ENCODE measurements at regions of chr18 and their contacts with region 1.

Region 1: DNA sequence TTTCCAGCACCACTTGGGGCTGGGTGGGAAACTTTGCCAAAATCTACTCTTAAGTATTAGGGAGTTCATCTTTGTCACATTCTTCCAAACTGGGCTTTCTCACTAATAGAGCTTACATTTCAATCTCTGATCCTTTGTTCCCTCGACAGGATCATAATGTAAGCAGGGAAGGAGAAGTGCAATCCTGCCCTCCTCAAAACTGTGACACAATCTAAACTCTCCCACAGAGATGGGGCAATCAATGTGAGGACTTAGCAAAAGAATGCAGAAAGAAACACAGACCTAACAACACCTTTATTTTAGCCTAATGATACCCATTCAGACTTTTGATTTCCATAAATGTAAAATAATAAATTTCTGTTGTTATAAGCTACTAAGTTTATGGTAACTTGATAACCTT is 40.8 kb downstream of the DSEL start:
- DNase-seq: no peak
- H3K4me3 ChIP-seq: no peak overlapping the region
- H3K4me3 Mint-ChIP-seq: no peak overlapping the region
- H3K27ac ChIP-seq: no peak overlapping the region
- H3K27ac Mint-ChIP-seq: no peak overlapping the region
- H3K4me1 ChIP-seq: no peaks in the 10 kb centered on the region
- H3K4me1 Mint-ChIP-seq: no peaks in the 10 kb centered on the region
- H3K27me3 ChIP-seq: no peaks in the 10 kb centered on the region
- H3K27me3 Mint-ChIP-seq: peaks cover 0 to 1% of the 10 kb centered on the region in 2 donors

Region 2: GRCh38 chr18:67250776-67251424 is 224.8 kb before region 1 on chr18:
- CTCF ChIA-PET with region 1: no interaction called
- POLR2A ChIA-PET with region 1: no interaction called
- intact Hi-C with region 1: loop called (anchors 5 kb)
- DNase-seq: no peak
- H3K4me3 ChIP-seq: no peak overlapping the region
- H3K4me3 Mint-ChIP-seq: no peak overlapping the region
- H3K27ac ChIP-seq: no peak overlapping the region
- H3K27ac Mint-ChIP-seq: no peak overlapping the region
- H3K4me1 ChIP-seq: no peaks in the 10 kb centered on the region
- H3K4me1 Mint-ChIP-seq: no peaks in the 10 kb centered on the region
- H3K27me3 ChIP-seq: no peaks in the 10 kb centered on the region
- H3K27me3 Mint-ChIP-seq: no peaks in the 10 kb centered on the region